HepG2 (cell line): ENCODE measurements at regions of chr1 and their contacts with region 1.

Region 1: GRCh38 chr1:26500488-26501175 is 28.4 kb downstream of the HMGN2 start:
- DNase-seq: peak; percentile 52
- ATAC-seq: peak; percentile 83
- H3K4me3 ChIP-seq: peak overlapping the region; percentile 63 to 81 (median 70)
- H3K27ac ChIP-seq: peak overlapping the region; percentile 79
- H3K4me1 ChIP-seq: peaks cover 12% of the 10 kb centered on the region
- H3K27me3 ChIP-seq: no peaks in the 10 kb centered on the region; a peak in 1 of 5 replicates
- CTCF ChIP-seq: no peak
- EP300 ChIP-seq: no peak
- POLR2A ChIP-seq: peak in 1 of 2 experiments; percentile 90; a peak in 2 of 4 replicates
- RAD21 ChIP-seq: 0 out of 2 replicates have a peak, but pooled peaks have one; percentile 2

Region 2: GRCh38 chr1:26431979-26432695 is 68.5 kb before region 1 on chr1 and contains the start of gene DHDDS:
- CTCF ChIA-PET with region 1: no interaction called
- POLR2A ChIA-PET with region 1: interaction called, 16 read pairs
- in situ Hi-C with region 1: no loop called
- intact Hi-C with region 1: no loop called
- DNase-seq: peak; percentile 91
- ATAC-seq: peak; percentile 97
- H3K4me3 ChIP-seq: peak within 1 kb of the TSS; percentile 75 to 97 (median 84)
- H3K27ac ChIP-seq: peak within 1 kb of the TSS; percentile 58
- H3K4me1 ChIP-seq: peaks cover 25% of the 10 kb centered on the region
- H3K27me3 ChIP-seq: peaks cover 0 to 4% of the 10 kb centered on the region in 2 experiments; a peak in 1 of 5 replicates
- CTCF ChIP-seq: no peak
- EP300 ChIP-seq: peak in 1 of 2 experiments; percentile 40; a peak in 1 of 4 replicates
- POLR2A ChIP-seq: peak; percentile 86
- RAD21 ChIP-seq: no peak
- total RNA-seq, gene DHDDS: 26.5 and 28.3 TPM in 2 replicates

Region 3: DNA sequence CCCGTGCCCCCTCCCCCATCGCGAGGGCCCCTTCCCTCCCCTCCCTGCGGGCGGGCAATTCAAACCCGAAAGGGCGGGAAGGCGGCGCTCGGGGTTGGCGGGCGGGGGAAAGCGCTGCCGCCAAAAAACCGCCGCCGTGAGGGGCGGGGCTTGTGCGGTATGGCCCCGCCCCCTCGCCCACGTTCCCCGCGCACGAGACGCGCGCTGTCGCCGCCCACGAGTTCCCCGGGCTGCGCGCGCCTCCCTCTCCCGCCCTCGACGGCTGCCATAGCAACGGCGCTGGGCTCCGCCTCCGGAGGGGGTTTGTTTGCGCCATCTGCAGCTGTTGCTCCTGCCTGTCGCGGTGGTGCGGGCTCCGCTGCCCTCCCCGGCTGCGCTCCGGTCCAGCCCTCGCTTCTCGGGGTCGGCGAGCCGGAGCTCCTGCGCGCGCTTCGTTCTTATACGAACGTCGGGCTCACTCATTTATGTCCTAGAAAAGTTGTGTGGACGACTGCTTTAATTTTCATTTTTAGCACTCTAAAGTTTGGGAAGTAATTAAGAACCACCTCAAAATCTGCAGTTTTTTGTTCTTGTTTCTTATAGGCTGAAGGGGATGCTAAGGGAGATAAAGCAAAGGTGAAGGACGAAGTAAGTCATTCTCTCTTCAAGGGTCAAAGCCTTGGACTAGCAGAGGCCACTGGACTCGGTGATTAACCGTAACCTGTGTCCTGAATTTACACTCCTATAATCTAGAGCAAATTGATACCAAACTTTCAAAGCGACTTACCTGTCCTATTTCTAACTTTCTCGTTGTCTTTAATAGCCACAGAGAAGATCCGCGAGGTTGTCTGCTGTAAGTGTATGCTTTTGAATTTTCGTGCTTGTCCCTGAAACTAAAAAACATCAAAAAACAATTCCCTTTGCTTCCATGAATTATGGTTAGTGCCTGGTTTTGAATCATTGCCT is 27.5 kb before region 1 on chr1:
- CTCF ChIA-PET with region 1: no interaction called
- POLR2A ChIA-PET with region 1: interaction called, 29 read pairs
- in situ Hi-C with region 1: no loop called
- intact Hi-C with region 1: no loop called
- DNase-seq: peak; percentile 85
- ATAC-seq: peak; percentile 72
- H3K4me3 ChIP-seq: peak overlapping the region; percentile 78 to 86 (median 85)
- H3K27ac ChIP-seq: peak overlapping the region; percentile 100
- H3K4me1 ChIP-seq: peaks cover 31% of the 10 kb centered on the region
- H3K27me3 ChIP-seq: no peaks in the 10 kb centered on the region; a peak in 1 of 5 replicates
- CTCF ChIP-seq: no peak
- EP300 ChIP-seq: peak in 1 of 2 experiments; percentile 16; a peak in 1 of 4 replicates
- POLR2A ChIP-seq: peak in 1 of 2 experiments; percentile 12; a peak in 2 of 4 replicates
- RAD21 ChIP-seq: peak; percentile 34

Region 4: GRCh38 chr1:26516987-26517765 is 16.5 kb after region 1 on chr1:
- CTCF ChIA-PET with region 1: no interaction called
- POLR2A ChIA-PET with region 1: interaction called, 11 read pairs
- in situ Hi-C with region 1: no loop called
- intact Hi-C with region 1: no loop called
- DNase-seq: no peak
- ATAC-seq: no peak
- H3K4me3 ChIP-seq: no peak overlapping the region
- H3K27ac ChIP-seq: no peak overlapping the region
- H3K4me1 ChIP-seq: 0 out of 2 replicates have a peak, but pooled peaks cover 6% of the 10 kb centered on the region
- H3K27me3 ChIP-seq: peaks cover 0 to 7% of the 10 kb centered on the region in 2 experiments; a peak in 3 of 5 replicates
- CTCF ChIP-seq: no peak
- EP300 ChIP-seq: no peak
- POLR2A ChIP-seq: no peak
- RAD21 ChIP-seq: no peak

Region 5: GRCh38 chr1:26529655-26530409 is 29.2 kb after region 1 on chr1 and contains the start of gene RPS6KA1:
- CTCF ChIA-PET with region 1: interaction called, 13 read pairs
- POLR2A ChIA-PET with region 1: interaction called, 41 read pairs
- in situ Hi-C with region 1: no loop called
- intact Hi-C with region 1: loop called (anchors 1 kb)
- DNase-seq: peak; percentile 38
- ATAC-seq: peak; percentile 62
- H3K4me3 ChIP-seq: peak within 1 kb of the TSS; percentile 70 to 92 (median 89)
- H3K27ac ChIP-seq: peak within 1 kb of the TSS; percentile 47
- H3K4me1 ChIP-seq: peaks cover 65% of the 10 kb centered on the region
- H3K27me3 ChIP-seq: peaks cover 0 to 3% of the 10 kb centered on the region in 2 experiments; a peak in 1 of 5 replicates
- CTCF ChIP-seq: no peak
- EP300 ChIP-seq: no peak
- POLR2A ChIP-seq: peak; percentile 33 to 72; a peak in 3 of 4 replicates
- RAD21 ChIP-seq: no peak
- total RNA-seq, gene RPS6KA1: 24.0 and 24.2 TPM in 2 replicates

Region 6: GRCh38 chr1:26555550-26556510 is 55.2 kb after region 1 on chr1:
- CTCF ChIA-PET with region 1: no interaction called
- POLR2A ChIA-PET with region 1: interaction called, 10 read pairs
- in situ Hi-C with region 1: no loop called
- intact Hi-C with region 1: no loop called
- DNase-seq: peak; percentile 75
- ATAC-seq: peak; percentile 72
- H3K4me3 ChIP-seq: no peak overlapping the region
- H3K27ac ChIP-seq: peak overlapping the region; percentile 53
- H3K4me1 ChIP-seq: peaks cover 29% of the 10 kb centered on the region
- H3K27me3 ChIP-seq: no peaks in the 10 kb centered on the region
- CTCF ChIP-seq: 0 out of 2 replicates have a peak, but pooled peaks have one; percentile 9
- EP300 ChIP-seq: peak in 1 of 2 experiments; percentile 9; a peak in 1 of 4 replicates
- POLR2A ChIP-seq: no peak
- RAD21 ChIP-seq: no peak

Region 7: DNA sequence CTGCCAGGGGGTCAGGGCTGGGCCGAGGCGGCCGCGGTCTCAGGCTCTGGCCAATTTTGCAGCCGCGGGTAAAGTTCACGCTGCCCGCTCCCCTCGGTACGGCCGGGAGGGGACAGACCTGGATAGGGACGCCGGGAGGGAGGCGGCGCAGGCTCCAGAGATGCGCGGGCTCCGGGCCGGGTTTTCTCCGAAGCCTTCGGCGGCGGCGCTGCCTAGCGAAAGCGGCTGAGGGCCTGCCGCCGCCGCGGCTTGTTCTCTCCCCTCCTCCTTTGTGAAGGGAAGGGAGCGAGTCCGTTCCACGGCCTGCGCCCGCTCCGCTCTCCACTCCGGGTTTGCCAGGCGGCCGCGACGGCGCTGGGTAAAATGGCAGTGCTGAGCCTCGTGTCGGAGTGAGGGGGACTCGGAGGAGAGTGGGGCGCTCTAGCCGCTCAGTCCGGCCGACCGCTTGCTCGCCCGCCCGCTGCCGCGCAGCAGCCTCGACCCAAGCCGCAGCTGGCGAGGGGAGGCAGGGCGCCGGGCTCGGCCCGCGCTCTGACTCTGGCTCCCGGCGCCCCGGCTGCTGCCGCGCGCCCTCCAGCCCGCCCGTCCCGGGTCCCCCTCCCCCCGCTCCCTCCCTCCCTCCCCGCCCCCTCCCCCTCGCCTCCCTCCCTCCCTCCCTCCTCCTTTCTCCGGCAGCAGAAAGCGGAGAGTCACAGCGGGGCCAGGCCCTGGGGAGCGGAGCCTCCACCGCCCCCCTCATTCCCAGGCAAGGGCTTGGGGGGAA is 194.9 kb after region 1 on chr1 and contains the start of gene ARID1A:
- CTCF ChIA-PET with region 1: no interaction called
- POLR2A ChIA-PET with region 1: interaction called, 11 read pairs
- in situ Hi-C with region 1: no loop called
- intact Hi-C with region 1: no loop called
- DNase-seq: peak; percentile 88
- ATAC-seq: peak; percentile 69
- H3K4me3 ChIP-seq: peak within 1 kb of the TSS; percentile 84 to 96 (median 91)
- H3K27ac ChIP-seq: peak within 1 kb of the TSS; percentile 98
- H3K4me1 ChIP-seq: peaks cover 60% of the 10 kb centered on the region
- H3K27me3 ChIP-seq: no peaks in the 10 kb centered on the region
- CTCF ChIP-seq: peak; percentile 44
- EP300 ChIP-seq: peak in 1 of 2 experiments; percentile 40; a peak in 1 of 4 replicates
- POLR2A ChIP-seq: peak; percentile 77 to 90
- RAD21 ChIP-seq: peak; percentile 84
- total RNA-seq, gene ARID1A: 11.9 and 18.4 TPM in 2 replicates